Tibial artery (tissue), 4 donors: ENCODE measurements at regions of chr19 and their contacts with region 1.

Region 1: DNA sequence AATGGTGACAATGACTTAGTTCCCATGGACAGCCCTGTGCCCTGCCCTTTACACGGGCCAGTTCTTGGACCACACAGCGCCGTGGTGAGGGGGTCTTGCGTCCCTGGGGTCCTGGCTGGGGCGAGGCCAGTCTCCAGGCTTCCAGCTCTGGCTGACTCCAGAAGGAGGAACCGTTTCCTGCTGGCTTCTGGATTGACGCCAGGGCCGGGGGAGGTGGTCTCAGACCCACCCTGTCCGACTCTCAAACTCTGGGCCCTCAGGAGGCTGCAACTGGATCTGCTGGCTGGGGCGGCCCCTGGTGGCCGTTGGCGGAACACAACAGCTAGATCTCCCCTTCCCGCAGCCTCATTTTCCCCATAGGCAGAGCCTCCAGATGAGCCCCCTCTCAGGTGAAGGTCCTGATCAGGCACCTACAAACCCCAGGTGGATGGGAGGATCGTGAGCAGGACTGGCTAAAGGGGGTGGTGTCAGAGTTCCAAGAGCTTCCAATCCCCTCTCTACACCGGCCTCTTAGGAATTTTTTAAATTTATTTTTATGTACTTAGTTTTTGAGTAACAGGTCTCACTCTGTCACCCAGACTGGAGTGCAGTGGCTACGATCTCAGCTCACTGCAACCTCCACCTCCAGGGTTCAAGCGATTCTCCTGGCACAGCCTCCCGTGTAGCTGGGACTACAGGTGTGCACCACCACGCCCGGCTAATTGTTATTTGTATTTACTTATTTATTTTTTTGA is 8.0 kb downstream of the CCDC194 start:
- DNase-seq: peak; percentile 45 to 79
- H3K4me3 ChIP-seq: no peak overlapping the region
- H3K27ac ChIP-seq: no peak overlapping the region
- H3K4me1 ChIP-seq: peaks cover 0 to 22% (median 18%) of the 10 kb centered on the region in 4 donors
- H3K27me3 ChIP-seq: no peaks in the 10 kb centered on the region
- CTCF ChIP-seq: peak; percentile 88 to 94

Region 2: DNA sequence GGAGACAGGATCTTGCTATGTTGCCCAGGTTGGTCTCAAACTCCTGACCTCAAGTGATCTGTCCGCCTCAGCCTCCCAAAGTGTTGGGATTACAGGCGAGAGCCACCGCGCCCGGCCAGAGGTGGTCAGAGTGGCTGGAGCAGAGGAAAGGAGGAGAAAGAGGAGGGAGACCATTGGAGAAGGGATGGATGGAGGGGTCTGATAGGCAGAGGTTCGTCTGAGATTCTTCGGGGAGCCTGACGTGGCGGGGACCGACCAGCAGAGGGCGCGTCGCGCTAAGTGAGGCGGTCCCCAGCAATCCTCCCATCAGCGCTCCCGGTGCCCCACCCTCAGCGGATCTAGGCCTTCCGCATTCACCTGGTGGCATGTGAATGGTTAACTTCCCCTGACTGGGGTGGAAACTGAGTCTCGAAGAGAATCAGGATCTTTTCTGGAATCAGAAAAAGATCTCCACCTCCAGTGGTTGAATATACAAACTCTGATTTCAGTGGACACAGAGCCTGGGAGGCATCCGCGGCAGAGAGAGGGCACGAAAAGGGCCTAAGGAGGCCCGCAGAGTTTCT is 39.9 kb before region 1 on chr19:
- intact Hi-C with region 1: loop called (anchors 1 kb)
- DNase-seq: peak; percentile 63 to 76
- H3K4me3 ChIP-seq: no peak overlapping the region
- H3K27ac ChIP-seq: peak overlapping the region in 1 of 2 donors; percentile 47
- H3K4me1 ChIP-seq: peaks cover 0 to 35% (median 31%) of the 10 kb centered on the region in 4 donors
- H3K27me3 ChIP-seq: no peaks in the 10 kb centered on the region
- CTCF ChIP-seq: peak; percentile 95 to 97